GM10248 (cell line): ENCODE measurements at regions of chr17 and their contacts with region 1.

Region 1: GRCh38 chr17:29148790-29149430 is 31.3 kb downstream of the MYO18A start:
- DNase-seq: peak; percentile 94
- CTCF ChIP-seq: peak; percentile 94

Region 2: DNA sequence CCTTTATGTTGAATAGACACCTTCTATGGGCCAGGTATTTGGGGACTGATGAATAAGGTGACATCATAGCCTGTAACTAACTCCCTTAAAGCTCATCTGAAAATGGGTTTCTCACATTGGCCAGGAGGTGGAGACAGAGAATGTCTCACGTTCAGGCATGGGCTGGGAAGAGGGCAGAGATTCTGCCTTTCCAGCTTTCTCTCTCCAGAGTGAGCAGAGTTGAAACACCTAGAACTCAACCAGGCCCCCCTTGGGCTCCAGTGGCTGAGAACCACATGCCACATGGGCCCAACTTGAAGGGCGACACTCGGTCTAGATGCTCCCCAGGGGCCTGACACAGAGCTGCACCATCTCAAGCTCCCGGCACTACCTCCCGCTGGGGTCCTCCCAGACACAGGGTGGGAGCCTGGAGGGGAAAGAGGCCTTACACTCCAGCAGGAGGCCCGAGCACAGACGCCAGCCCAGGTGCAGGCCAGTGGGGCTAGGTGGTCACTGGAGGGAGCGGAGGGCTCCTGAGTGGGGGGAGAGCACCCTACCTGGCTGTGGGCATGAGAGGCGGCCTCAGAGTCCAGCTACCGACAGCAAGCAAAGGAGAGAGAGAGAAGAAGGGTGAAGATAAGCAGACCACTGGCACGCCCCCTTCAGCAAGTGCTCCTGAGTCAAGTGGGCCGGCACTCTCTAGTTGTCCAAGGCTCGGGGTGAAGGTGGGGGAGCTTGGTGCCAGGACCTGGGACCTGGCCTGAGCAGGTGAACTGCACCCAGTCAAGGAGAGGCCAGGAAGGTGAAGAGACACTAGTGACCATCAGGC is 24.6 kb before region 1 on chr17:
- CTCF ChIA-PET with region 1: interaction called, 28 read pairs
- POLR2A ChIA-PET with region 1: no interaction called
- DNase-seq: peak; percentile 79
- CTCF ChIP-seq: peak; percentile 68

Region 3: GRCh38 chr17:29162738-29163341 is 13.9 kb after region 1 on chr17:
- CTCF ChIA-PET with region 1: interaction called, 12 read pairs
- POLR2A ChIA-PET with region 1: interaction called, 3 read pairs
- DNase-seq: no peak
- CTCF ChIP-seq: no peak

Region 4: DNA sequence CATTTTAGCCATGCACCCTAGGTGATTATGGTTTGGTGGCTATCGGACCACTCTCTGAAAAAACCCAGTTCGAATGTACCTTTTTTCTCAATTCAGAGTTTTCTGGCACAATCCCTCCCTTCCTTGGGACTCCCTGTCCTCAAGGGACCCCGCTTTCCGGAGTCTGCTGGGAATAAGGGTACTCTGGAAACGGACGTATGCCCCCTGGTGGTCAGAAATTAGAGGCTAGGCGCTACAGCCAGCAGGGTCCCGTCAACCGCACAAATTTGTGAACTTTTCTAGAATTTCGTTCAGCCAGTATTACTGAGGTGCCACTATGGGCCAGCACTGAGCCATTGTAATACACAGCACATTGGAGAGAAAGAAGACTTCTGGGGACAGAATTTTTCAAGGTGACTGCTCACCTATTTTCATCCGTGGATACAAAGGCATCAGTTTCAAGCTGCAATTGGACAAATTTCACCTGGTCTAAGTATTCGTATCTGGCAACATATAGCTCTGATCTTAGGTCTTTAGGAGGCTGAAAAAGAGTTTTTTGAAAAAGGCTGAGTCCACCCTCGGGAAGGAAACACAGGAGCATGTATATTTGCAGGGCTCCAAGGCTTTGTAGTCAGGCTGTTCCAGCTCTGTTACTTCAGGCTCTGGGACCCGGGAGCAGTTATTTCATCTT is 70.6 kb after region 1 on chr17:
- CTCF ChIA-PET with region 1: interaction called, 298 read pairs
- POLR2A ChIA-PET with region 1: no interaction called
- DNase-seq: peak; percentile 80
- CTCF ChIP-seq: peak; percentile 87

Region 5: GRCh38 chr17:29292992-29293889 is 144.3 kb after region 1 on chr17:
- CTCF ChIA-PET with region 1: interaction called, 18 read pairs
- POLR2A ChIA-PET with region 1: interaction called, 9 read pairs
- DNase-seq: peak; percentile 63
- CTCF ChIP-seq: peak; percentile 27